ENCODE measurements at regions of chr9 and their contacts with region 1.

Region 1: GRCh38 chr9:95907794-95908193 is 32.3 kb downstream of the ERCC6L2 start:
- DNase-seq: peak in 3 of 14 experiments; percentile 7 to 17 (median 10)
- ATAC-seq: no peak
- H3K4me3 ChIP-seq: no peak overlapping the region
- H3K4me3 Mint-ChIP-seq: no peak overlapping the region
- H3K27ac ChIP-seq: no peak overlapping the region
- H3K27ac Mint-ChIP-seq: no peak overlapping the region
- H3K4me1 ChIP-seq: no peaks in the 10 kb centered on the region
- H3K4me1 Mint-ChIP-seq: peaks cover 35% of the 10 kb centered on the region
- H3K27me3 ChIP-seq: no peaks in the 10 kb centered on the region
- H3K27me3 Mint-ChIP-seq: no peaks in the 10 kb centered on the region
- CTCF ChIP-seq: no peak

Region 2: GRCh38 chr9:95379630-95380029 is 528.2 kb before region 1 on chr9:
- CTCF ChIA-PET with region 1: no interaction called
- POLR2A ChIA-PET with region 1: no interaction called
- intact Hi-C with region 1: no loop called
- DNase-seq: peak in 12 of 14 experiments; percentile 1 to 56 (median 6)
- ATAC-seq: no peak
- H3K4me3 ChIP-seq: no peak overlapping the region
- H3K4me3 Mint-ChIP-seq: no peak overlapping the region
- H3K27ac ChIP-seq: no peak overlapping the region
- H3K27ac Mint-ChIP-seq: no peak overlapping the region
- H3K4me1 ChIP-seq: peaks cover 2% of the 10 kb centered on the region
- H3K4me1 Mint-ChIP-seq: no peaks in the 10 kb centered on the region
- H3K27me3 ChIP-seq: peaks cover 15 to 20% of the 10 kb centered on the region in 2 experiments
- H3K27me3 Mint-ChIP-seq: peaks cover 45% of the 10 kb centered on the region
- CTCF ChIP-seq: peak; percentile 56

Region 3: DNA sequence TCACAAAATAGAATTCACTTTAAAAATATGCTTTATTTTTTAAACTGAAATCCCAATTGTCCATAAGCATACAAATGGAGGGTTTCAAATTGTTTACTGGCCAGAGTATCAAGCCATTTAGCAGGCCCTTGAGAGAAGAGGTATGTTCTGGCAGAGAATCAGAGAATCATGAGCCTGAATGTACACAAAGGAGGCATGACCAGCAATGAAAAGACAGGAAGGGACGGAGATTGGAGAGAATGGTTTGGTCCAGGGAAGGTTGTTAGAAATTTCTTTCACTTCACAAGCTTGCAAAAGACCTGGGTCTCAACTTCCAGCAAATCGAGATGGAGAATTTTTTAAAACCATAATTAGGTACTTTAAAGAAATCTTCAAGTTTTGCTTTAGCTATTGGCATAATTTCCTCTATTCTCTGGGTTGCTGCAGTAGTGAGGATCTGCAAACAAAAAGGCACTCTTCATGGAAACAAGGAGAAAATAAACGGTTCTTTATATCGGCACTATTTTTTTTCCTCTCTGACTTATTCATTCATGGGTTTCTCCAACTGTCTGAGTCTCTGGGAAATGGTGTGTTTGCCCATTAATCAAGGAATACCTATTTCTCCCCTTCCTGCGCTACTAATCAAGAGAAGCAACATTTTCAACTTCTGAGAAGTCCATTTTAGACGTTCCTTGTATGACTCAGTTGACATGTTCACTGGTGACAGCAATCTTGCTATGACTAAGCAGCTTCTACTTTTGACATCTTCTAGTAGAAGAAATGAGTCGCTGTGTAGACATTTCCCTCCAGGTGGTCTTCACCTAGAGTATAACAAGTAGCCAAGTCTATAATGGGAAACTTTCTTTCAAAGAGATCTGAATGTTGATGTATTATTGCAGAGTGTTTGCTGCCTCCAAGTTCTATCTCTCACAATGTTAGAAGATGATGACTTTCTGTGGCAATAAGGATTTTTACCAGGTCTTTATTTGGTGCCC is 55.4 kb before region 1 on chr9:
- CTCF ChIA-PET with region 1: no interaction called
- POLR2A ChIA-PET with region 1: no interaction called
- intact Hi-C with region 1: loop called in 1 of 2 experiments (anchors 5 kb)
- DNase-seq: no peak
- ATAC-seq: no peak
- H3K4me3 ChIP-seq: no peak overlapping the region
- H3K4me3 Mint-ChIP-seq: no peak overlapping the region
- H3K27ac ChIP-seq: no peak overlapping the region
- H3K27ac Mint-ChIP-seq: no peak overlapping the region
- H3K4me1 ChIP-seq: peaks cover 3% of the 10 kb centered on the region
- H3K4me1 Mint-ChIP-seq: peaks cover 17% of the 10 kb centered on the region
- H3K27me3 ChIP-seq: no peaks in the 10 kb centered on the region
- H3K27me3 Mint-ChIP-seq: no peaks in the 10 kb centered on the region
- CTCF ChIP-seq: no peak

Measured in CD4-positive, alpha-beta T cell (primary cell).